GM13977 (cell line): ENCODE measurements at regions of chr1 and their contacts with region 1.

Region 1: GRCh38 chr1:109290998-109291397 is 8.1 kb upstream of the PSRC1 start:
- DNase-seq: no peak
- CTCF ChIP-seq: no peak

Region 2: DNA sequence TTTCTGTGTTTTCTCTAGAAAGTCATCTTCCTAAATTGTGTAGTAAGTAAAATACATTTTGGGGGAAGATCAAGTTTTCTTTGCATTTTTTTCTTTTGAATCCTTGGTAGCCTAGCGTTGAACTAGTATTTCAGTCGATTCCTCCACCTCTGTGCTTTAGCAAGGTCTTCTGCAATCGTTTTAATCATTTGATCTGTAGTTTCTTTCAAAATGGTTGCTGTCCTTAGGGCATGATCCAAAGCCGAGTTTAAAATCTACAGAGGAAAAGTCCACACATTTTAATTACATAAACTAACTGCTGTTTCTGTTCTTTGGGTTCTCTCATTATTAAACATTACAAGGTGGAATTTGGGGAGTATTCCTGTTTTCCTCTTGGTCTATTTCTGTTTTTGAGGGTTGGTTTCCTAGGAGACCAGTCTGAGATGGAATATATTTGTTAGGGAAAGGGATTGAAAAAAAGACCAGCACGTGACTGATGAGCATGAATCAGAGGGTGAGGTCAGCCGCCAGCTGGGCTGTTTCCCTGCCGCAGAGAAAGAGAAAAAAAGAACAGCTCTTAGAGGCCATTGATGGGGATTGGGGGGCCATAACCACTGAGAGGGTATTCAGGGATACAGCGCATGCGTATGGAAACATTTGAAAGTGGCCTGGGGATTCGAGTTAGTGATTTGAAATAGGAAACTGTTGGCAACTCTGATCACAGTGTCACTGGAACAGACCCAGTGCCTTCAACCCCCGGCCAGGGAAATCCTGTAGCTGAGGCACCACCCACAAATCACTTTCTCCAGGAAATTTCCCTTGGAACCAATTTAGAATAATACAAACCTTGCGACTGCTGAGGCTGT is 474.7 kb before region 1 on chr1:
- in situ Hi-C with region 1: no loop called
- DNase-seq: no peak
- CTCF ChIP-seq: no peak

Region 3: GRCh38 chr1:109397538-109398342 is 106.7 kb after region 1 on chr1 and contains the start of gene SORT1:
- in situ Hi-C with region 1: loop called (anchors 5 kb)
- DNase-seq: peak; percentile 81
- CTCF ChIP-seq: no peak